ENCODE measurements at regions of chr10 and their contacts with region 1.

Region 1: GRCh38 chr10:118543714-118544400 is 51.6 kb downstream of the PRLHR start:
- DNase-seq: peak; percentile 70
- ATAC-seq: peak; percentile 90
- H3K4me3 ChIP-seq: no peak overlapping the region
- H3K27ac ChIP-seq: no peak overlapping the region
- H3K4me1 ChIP-seq: no peaks in the 10 kb centered on the region
- H3K27me3 ChIP-seq: peaks cover 25% of the 10 kb centered on the region
- CTCF ChIP-seq: peak; percentile 78

Region 2: GRCh38 chr10:118459726-118460193 is 84.1 kb before region 1 on chr10:
- CTCF ChIA-PET with region 1: no interaction called
- POLR2A ChIA-PET with region 1: no interaction called
- intact Hi-C with region 1: loop called (anchors 10 kb)
- DNase-seq: peak; percentile 73
- ATAC-seq: peak; percentile 87
- H3K4me3 ChIP-seq: no peak overlapping the region
- H3K27ac ChIP-seq: no peak overlapping the region
- H3K4me1 ChIP-seq: no peaks in the 10 kb centered on the region
- H3K27me3 ChIP-seq: peaks cover 78% of the 10 kb centered on the region
- CTCF ChIP-seq: peak; percentile 71

Measured in PC-3 (cell line).